ENCODE measurements at regions of chr6 and their contacts with region 1.

Region 1: DNA sequence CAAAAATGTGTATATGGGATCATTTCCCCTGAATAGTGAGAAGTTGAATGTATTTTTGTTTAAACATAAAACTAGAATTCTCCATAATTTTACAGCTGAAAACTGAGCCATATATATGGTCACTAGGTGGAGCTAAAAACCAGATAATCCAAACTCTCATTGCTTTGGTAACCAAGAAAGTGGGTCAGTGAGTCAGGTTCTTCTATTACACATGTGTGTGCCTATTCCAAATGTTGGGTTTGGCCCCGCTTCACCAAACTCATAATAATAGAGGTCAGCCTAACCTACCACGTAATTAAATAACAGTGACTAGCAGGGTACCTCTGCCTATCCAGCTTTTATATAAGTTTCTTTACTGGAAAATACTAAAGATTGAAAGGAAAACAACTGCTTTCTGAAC is 19.3 kb upstream of the RNGTT start:
- DNase-seq: no peak
- H3K4me3 Mint-ChIP-seq: no peak overlapping the region
- H3K27ac Mint-ChIP-seq: no peak overlapping the region
- H3K4me1 Mint-ChIP-seq: no peaks in the 10 kb centered on the region
- H3K27me3 Mint-ChIP-seq: peaks cover 4% of the 10 kb centered on the region

Region 2: DNA sequence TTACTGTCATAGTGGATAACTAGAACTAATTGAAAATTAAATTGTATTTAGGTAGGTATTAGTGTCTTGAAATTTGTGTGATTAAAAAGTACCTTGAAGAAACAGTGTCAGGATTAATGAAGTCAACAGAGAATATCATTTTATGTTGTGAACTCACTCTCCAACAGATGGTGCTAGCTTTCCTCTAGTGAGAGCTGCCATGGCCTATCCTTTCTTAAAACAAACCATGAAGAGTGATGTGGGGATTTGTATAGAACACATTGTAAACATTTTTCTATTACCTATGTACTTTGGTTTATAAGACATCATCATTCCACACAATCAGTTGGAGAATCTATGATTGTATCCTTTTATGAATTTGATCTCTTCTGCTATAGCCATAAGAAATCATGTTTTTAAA is 139.9 kb after region 1 on chr6:
- intact Hi-C with region 1: loop called (anchors 2 kb)
- DNase-seq: no peak
- H3K4me3 Mint-ChIP-seq: no peak overlapping the region
- H3K27ac Mint-ChIP-seq: no peak overlapping the region
- H3K4me1 Mint-ChIP-seq: no peaks in the 10 kb centered on the region
- H3K27me3 Mint-ChIP-seq: peaks cover 29% of the 10 kb centered on the region

Region 3: DNA sequence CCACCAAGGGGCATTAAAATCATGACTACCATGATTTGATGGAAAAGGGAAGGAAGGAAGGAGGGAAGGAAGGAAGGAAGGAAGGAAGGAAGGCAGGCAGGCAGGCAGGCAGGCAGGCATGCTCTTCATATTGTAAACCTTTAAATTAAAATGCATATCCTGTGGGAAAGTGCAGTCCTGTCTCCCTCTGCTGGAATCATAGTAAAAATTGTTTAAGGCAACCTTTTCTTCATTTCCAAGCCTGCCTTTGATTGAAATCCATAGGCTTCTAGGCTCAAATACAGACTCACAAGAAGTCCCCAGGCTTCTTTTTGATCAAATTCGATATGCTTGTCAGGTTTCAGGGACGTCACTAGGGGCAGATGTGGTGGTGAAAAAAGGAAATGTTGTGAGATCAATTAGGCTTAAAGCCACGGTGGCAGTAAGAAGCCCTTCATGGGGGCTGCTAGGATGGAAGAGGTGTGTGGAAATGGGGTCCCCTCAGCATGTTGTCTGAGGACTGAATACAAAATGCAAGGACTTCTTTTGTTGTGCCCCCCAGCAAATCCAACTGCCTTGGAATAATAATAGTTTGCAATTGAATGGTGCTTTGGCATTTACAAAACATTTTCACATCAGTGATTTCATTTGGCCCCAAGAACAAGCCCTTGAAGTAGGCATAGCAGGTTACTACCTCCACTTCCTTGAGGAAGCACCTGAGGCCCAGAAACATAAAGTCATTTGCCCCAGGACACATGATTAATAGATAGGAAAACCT is 260.0 kb after region 1 on chr6:
- intact Hi-C with region 1: loop called (anchors 1 kb)
- DNase-seq: no peak
- H3K4me3 Mint-ChIP-seq: no peak overlapping the region
- H3K27ac Mint-ChIP-seq: no peak overlapping the region
- H3K4me1 Mint-ChIP-seq: peaks cover 16% of the 10 kb centered on the region
- H3K27me3 Mint-ChIP-seq: peaks cover 17% of the 10 kb centered on the region

Region 4: GRCh38 chr6:89412071-89413005 is 429.6 kb after region 1 on chr6 and contains the start of gene RRAGD:
- intact Hi-C with region 1: loop called (anchors 2 kb)
- DNase-seq: peak; percentile 49
- H3K4me3 Mint-ChIP-seq: peak within 1 kb of the TSS; percentile 95
- H3K27ac Mint-ChIP-seq: peak within 1 kb of the TSS; percentile 94
- H3K4me1 Mint-ChIP-seq: peaks cover 25% of the 10 kb centered on the region
- H3K27me3 Mint-ChIP-seq: peaks cover 50% of the 10 kb centered on the region
- total RNA-seq, gene RRAGD: 7.8 and 10.1 TPM in 2 replicates

Region 5: DNA sequence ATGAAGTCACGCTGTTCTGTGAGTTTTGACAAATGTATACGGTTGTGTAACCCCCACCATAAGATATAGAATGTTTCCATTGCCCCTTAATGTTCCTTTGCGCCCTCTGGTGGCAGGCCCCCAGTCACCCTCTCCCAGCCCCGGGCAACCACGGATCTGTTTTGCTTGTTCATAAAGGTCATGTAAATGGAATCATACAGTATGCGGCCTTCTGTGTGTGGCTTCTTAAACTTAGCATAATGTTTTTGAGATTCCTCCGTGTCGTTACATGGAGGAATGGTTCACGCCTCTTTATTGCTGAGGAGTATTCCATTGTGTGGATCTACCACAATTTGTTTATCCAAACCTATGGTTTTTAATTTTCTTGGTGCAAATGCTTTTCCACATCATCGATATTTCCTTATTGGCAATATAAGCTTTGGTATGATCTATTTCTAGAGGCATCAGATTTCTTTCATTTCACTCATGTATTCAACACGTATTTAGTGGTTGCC is 627.5 kb after region 1 on chr6:
- intact Hi-C with region 1: loop called (anchors 1 kb)
- DNase-seq: peak; percentile 65
- H3K4me3 Mint-ChIP-seq: no peak overlapping the region
- H3K27ac Mint-ChIP-seq: no peak overlapping the region
- H3K4me1 Mint-ChIP-seq: peaks cover 15% of the 10 kb centered on the region
- H3K27me3 Mint-ChIP-seq: peaks cover 2% of the 10 kb centered on the region